Posterior cingulate gyrus (tissue), 11 donors: ENCODE measurements at regions of chr13 and their contacts with region 1.

Region 1: GRCh38 chr13:98653463-98653985 is 76.6 kb upstream of the STK24 start:
- DNase-seq: peak; percentile 42 to 94 (median 76)

Region 2: DNA sequence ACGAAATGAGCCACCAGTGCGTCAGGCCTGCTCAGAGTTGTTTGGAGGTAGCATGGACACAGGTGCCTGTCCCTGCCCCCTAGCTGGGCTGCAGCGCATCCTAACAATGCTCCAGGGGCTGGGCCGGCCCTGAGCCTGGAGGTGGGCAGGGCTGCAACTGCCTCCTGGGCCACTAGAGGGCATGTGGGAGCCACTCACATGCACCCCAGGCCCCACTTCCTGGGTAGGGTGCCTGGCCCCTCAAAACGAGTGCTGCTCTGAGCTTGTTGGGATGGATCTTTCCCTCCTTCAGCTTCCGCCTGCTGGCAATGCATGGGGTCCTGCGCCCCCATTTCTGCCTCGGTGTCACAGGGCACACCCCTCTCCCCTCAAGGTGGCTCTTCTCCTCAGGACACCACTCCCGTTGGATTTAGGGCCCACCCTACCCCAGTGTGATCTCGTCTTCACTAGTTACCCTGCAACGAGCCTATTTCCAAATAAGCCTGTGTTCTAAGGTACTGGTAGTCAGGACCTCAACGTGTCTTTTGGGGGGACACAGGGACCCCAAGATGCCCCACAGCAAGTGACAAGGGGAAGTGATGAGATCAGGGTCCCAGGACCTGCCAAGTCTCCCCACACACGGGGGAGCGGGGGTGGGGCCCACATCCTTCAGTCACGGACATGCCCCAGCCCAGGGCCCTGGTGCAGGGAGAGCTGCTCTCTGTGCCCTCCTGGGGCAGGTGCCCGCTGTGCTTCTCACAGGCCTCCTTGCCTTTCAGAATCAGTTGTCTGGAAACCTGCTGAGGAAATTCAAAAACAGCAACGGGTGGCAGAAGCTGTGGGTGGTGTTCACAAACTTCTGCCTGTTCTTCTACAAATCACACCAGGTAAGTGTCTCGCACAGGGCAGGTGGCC is 207.9 kb before region 1 on chr13:
- intact Hi-C with region 1: loop called (anchors 1 kb)
- DNase-seq: peak in 9 of 10 donors; percentile 61 to 95 (median 75)

Region 3: GRCh38 chr13:98910501-98910951 is 257.0 kb after region 1 on chr13:
- intact Hi-C with region 1: no loop called
- DNase-seq: no peak